Heart left ventricle (tissue), 16 donors: ENCODE measurements at regions of chr1 and their contacts with region 1.

Region 1: DNA sequence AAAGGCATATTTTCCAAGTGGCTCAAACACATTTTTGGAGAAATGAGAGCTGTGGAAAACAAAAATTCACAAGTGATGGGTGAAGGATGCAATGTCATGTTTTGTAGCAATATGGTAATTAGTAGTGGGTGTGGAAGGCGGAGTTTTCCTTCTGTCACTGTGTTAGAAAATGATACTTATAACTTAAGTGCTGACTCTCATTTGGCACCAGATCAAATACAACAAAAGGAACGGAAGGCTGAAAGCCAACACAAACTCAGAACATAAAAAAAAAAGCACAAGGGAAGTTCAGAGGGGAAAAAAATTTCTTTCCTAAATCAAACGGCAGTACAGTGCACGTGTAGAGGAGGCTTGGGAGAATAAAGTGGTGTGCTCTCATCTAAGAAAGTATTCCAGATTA is at the start of gene TNFSF18:
- DNase-seq: peak in 1 of 5 donors; percentile 26
- ATAC-seq: peak; percentile 42 to 82 (median 62)
- H3K4me3 ChIP-seq: no peak within 1 kb of the TSS
- H3K27ac ChIP-seq: no peak within 1 kb of the TSS
- H3K4me1 ChIP-seq: peaks cover 0 to 45% (median 7%) of the 10 kb centered on the region in 12 donors
- H3K27me3 ChIP-seq: no peaks in the 10 kb centered on the region
- CTCF ChIP-seq: no peak
- POLR2A ChIP-seq: no peak
- total RNA-seq, gene TNFSF18: 0.09 to 0.29 (median 0.11) TPM in 3 of 9 donors, not detected in the others

Region 2: GRCh38 chr1:172906778-172907592 is 143.9 kb before region 1 on chr1:
- intact Hi-C with region 1: no loop called
- DNase-seq: no peak
- ATAC-seq: no peak
- H3K4me3 ChIP-seq: no peak overlapping the region
- H3K27ac ChIP-seq: peak overlapping the region in 1 of 12 donors; percentile 10
- H3K4me1 ChIP-seq: peaks cover 0 to 12% (median 0%) of the 10 kb centered on the region in 12 donors
- H3K27me3 ChIP-seq: no peaks in the 10 kb centered on the region
- CTCF ChIP-seq: no peak
- POLR2A ChIP-seq: no peak

Region 3: DNA sequence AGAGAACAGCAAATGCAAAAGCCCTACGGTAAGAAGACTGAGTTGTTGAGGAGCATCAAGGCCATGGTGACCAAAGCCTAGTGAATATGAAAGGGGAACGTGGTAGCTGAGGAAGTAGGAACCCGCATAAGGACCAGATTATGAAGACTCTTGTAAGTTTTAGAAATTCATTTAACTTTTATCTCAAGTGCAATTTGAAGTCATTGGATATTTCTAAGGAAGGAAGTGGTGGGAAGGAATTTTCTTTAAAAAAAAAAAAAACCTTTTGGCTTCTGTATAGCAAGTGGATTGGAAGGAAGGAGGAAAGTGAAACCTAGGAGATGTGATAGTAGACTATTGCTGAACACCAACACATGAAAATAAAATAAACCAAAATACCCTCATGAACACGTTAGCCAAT is 119.1 kb before region 1 on chr1:
- intact Hi-C with region 1: loop called in 1 of 10 experiments (anchors 5 kb)
- DNase-seq: no peak
- ATAC-seq: no peak
- H3K4me3 ChIP-seq: no peak overlapping the region
- H3K27ac ChIP-seq: no peak overlapping the region
- H3K4me1 ChIP-seq: peaks cover 0 to 43% (median 6%) of the 10 kb centered on the region in 12 donors
- H3K27me3 ChIP-seq: no peaks in the 10 kb centered on the region
- CTCF ChIP-seq: no peak
- POLR2A ChIP-seq: no peak

Region 4: GRCh38 chr1:173122958-173123852 is 72.3 kb after region 1 on chr1:
- intact Hi-C with region 1: loop called in 1 of 10 experiments (anchors 5 kb)
- DNase-seq: peak; percentile 66 to 77 (median 75)
- ATAC-seq: peak; percentile 82 to 97 (median 96)
- H3K4me3 ChIP-seq: peak overlapping the region in 10 of 12 donors; percentile 7 to 48 (median 28)
- H3K27ac ChIP-seq: peak overlapping the region; percentile 59 to 94 (median 76)
- H3K4me1 ChIP-seq: peaks cover 0 to 26% (median 11%) of the 10 kb centered on the region in 12 donors
- H3K27me3 ChIP-seq: no peaks in the 10 kb centered on the region
- CTCF ChIP-seq: no peak
- POLR2A ChIP-seq: no peak